Tibial artery (tissue), 4 donors: ENCODE measurements at regions of chr13 and their contacts with region 1.

Region 1: DNA sequence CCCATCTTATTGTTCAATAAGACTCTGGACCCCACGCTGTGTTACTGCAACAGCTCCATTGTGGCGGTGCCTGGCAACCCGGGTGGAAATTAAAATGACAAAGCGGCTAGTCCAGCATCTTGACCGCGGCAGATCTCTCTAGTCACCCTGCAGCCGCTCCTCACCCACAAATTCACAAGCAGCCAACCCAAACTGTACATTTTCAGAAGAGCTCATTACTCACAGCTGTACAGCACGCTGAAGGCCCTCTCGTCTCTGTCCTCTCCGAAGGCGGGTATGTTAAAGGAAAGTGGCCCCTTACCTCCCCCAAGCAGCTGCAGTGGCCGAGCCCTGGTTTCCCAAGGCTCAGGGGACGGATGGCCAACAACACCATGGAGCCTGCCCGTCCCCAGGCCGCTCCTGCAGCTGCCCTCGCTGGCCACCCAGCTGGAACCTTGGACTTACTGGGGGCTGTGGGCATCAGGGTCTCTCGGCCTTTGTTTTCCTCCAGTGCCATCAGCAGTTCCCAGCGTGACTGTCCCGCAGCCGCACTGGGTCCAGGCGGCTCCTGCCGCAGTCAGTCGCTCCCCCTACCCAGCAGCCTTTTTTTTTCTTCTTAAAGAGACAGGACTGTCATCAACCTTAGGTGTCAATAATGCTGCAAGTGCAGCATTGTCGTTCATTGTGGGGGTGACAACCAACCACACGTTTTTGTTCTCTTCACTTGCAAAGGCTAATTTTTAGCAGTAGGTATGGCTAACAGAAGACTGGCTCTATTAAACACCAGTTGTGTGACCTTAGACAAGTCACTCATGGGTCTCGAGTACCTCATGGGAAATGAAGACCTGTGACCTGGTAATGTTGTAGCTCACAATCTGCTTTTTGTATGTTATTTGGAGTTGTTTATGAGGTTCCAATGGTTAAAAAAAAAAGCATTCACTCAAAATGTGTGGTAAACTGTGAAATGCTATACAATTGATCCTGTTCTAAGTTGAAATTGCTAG is at the start of gene SACS:
- DNase-seq: no peak
- H3K4me3 ChIP-seq: peak within 1 kb of the TSS; percentile 62 to 71
- H3K27ac ChIP-seq: peak within 1 kb of the TSS; percentile 82 to 88
- H3K4me1 ChIP-seq: peaks cover 0 to 32% (median 10%) of the 10 kb centered on the region in 4 donors
- H3K27me3 ChIP-seq: no peaks in the 10 kb centered on the region
- CTCF ChIP-seq: no peak

Region 2: GRCh38 chr13:23375001-23375971 is 58.2 kb before region 1 on chr13:
- intact Hi-C with region 1: loop called (anchors 5 kb)
- DNase-seq: peak; percentile 94 to 98
- H3K4me3 ChIP-seq: peak overlapping the region; percentile 73 to 93
- H3K27ac ChIP-seq: peak overlapping the region; percentile 82 to 95
- H3K4me1 ChIP-seq: peaks cover 0 to 69% (median 36%) of the 10 kb centered on the region in 4 donors
- H3K27me3 ChIP-seq: no peaks in the 10 kb centered on the region
- CTCF ChIP-seq: peak; percentile 2 to 23

Region 3: GRCh38 chr13:23386533-23386932 is 46.9 kb before region 1 on chr13:
- intact Hi-C with region 1: no loop called
- DNase-seq: no peak
- H3K4me3 ChIP-seq: no peak overlapping the region
- H3K27ac ChIP-seq: no peak overlapping the region
- H3K4me1 ChIP-seq: peaks cover 0 to 17% (median 3%) of the 10 kb centered on the region in 4 donors
- H3K27me3 ChIP-seq: no peaks in the 10 kb centered on the region
- CTCF ChIP-seq: no peak

Region 4: GRCh38 chr13:23418776-23419683 is 14.4 kb before region 1 on chr13:
- intact Hi-C with region 1: no loop called
- DNase-seq: no peak
- H3K4me3 ChIP-seq: no peak overlapping the region
- H3K27ac ChIP-seq: no peak overlapping the region
- H3K4me1 ChIP-seq: peaks cover 0 to 21% (median 0%) of the 10 kb centered on the region in 4 donors
- H3K27me3 ChIP-seq: no peaks in the 10 kb centered on the region
- CTCF ChIP-seq: no peak

Region 5: GRCh38 chr13:25024175-25024574 is 1590.7 kb after region 1 on chr13:
- intact Hi-C with region 1: no loop called
- DNase-seq: no peak
- H3K4me3 ChIP-seq: no peak overlapping the region
- H3K27ac ChIP-seq: no peak overlapping the region
- H3K4me1 ChIP-seq: no peaks in the 10 kb centered on the region
- H3K27me3 ChIP-seq: peaks cover 0 to 9% of the 10 kb centered on the region in 2 donors
- CTCF ChIP-seq: no peak